ENCODE measurements at regions of chr19 and their contacts with region 1.

Region 1: DNA sequence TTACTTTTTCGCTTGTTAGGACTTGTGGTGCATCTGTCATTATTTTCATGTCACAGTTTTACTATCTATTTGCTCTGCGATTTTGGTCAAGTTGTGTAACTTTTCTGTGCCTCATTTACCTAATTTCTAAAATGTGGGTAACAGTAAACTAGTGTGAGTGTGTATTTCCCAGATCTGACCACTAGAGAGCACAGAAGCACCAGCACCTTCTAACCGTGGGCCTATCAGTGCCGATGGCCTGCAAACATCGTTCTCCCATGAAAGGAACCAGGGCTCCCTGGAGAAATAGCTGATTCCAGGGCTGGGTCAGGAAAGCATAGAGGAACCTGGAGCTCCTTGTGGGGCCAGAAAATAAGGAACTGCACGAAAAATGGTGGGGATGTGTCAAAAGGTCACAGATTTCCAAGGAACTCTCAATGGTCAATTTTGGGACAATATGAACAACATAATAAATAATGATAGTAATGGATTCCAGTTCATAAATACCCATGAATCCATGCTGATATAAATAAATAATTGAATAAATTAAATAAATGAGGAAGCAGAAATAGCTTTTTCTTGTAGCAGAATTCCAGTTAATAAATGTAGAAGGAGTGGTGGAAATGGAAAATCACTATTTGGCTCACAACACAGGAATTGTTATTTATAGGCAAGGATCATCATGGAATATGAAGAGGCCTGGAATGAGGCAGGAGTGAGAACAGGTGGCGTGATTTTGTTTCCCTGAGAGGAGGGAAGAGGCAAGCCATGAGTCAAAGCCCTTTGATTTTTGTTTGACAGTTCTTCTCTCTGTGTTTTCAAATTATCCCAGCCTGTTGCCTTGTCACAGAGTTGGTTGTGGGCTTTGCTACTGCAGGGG is 31.1 kb downstream of the CEACAM8 start:
- DNase-seq: no peak
- H3K4me3 ChIP-seq: no peak overlapping the region
- CTCF ChIP-seq: peak; percentile 69

Region 2: DNA sequence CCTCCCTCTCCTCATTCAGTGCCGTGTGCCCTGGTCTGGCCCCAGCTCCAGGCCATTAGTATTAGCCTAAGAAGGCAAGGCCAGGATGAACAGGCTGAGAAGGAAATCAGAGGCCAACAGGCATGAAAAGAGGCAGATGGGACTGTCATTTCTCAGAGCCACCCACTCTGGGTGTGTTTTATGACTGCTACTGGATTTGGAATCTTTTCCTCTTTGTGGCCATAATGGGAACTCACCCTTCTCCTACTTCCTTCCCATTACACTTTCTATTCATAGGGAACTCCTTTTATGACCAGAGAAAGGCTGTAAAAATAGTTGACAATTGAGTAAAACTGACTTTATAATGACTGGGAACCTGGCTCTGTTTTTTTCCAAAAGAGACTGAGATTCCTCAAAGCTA is 13.4 kb after region 1 on chr19:
- CTCF ChIA-PET with region 1: interaction called, 24 read pairs
- POLR2A ChIA-PET with region 1: no interaction called
- DNase-seq: no peak
- H3K4me3 ChIP-seq: no peak overlapping the region
- CTCF ChIP-seq: no peak

Region 3: DNA sequence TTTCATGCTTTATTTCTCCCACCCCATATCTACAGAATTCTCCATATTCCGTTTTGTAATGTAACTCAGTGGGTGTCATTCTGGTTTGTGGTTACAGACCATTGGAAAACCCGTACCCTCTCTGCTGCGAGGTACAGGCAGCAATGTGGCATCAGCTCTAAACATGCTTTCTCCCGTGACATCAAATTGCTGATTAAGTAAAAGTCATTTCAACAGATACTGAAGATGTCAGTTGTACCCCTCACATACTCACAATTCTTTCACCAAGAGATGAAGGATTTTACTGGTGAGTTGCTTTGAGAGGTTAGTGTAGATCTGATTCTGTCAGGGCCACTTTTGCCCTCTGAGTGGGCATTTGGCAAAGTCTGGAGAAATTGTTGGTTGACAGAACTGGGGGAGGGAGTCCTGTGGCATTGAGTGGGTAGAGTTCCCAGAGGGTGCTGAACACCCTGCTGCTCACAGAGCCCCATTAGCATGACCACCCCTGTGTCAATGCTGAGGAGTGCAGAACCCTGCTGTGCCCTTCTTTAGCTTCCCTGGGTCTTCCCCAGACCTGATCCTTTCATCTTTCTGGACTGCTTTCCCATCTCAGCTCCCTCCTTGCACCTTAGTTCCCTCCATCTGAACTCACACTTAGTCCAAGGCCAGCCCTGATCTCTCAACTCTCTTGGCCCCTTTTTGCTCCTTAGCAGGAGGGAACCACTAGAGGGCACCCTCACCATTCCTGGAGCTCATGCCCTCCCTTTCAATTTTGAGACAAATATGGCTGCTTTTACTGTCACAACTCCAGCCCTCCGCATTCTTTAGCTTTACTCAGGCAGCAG is 71.0 kb after region 1 on chr19:
- CTCF ChIA-PET with region 1: interaction called, 10 read pairs
- POLR2A ChIA-PET with region 1: no interaction called
- DNase-seq: no peak
- H3K4me3 ChIP-seq: no peak overlapping the region
- CTCF ChIP-seq: peak; percentile 64